B cell (primary cell): ENCODE measurements at regions of chr5 and their contacts with region 1.

Region 1: DNA sequence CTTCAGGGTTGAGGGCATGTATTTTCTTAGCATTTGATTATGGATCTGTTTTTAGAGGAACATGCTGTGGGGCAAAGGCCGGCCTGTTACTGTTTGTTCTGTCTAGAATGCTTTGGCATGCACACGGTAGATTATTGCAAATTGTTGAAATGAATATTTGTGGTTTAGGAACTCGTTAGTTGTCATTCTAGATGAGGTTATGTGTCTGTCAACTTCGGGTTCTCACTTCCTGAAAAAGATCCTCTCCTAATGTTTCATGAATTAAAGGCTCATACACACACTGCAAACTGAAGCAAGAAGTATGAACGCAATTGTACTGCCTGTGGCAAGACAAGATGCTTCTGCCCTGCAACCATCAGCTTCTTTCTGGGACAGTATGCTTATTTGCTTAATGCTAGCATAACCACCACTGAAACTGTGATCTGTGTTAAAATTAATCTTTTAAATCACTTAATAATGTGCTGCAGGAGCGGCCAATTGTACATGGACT is 99.6 kb downstream of the BASP1 start:
- DNase-seq: peak; percentile 70
- ATAC-seq: peak; percentile 53
- H3K4me3 ChIP-seq: peak overlapping the region in 3 of 5 experiments; percentile 10 to 58 (median 32)
- H3K4me3 Mint-ChIP-seq: peak overlapping the region; percentile 53
- H3K27ac ChIP-seq: peak overlapping the region; percentile 71 to 72
- H3K27ac Mint-ChIP-seq: peak overlapping the region; percentile 76
- H3K4me1 ChIP-seq: peaks cover 53 to 58% of the 10 kb centered on the region in 2 donors
- H3K4me1 Mint-ChIP-seq: peaks cover 57% of the 10 kb centered on the region
- H3K27me3 ChIP-seq: no peaks in the 10 kb centered on the region
- H3K27me3 Mint-ChIP-seq: no peaks in the 10 kb centered on the region
- CTCF ChIP-seq: no peak

Region 2: GRCh38 chr5:17269201-17269600 is 47.8 kb before region 1 on chr5:
- CTCF ChIA-PET with region 1: no interaction called
- POLR2A ChIA-PET with region 1: no interaction called
- intact Hi-C with region 1: loop called (anchors 10 kb)
- DNase-seq: peak; percentile 48
- ATAC-seq: peak; percentile 59
- H3K4me3 ChIP-seq: peak overlapping the region in 2 of 5 experiments; percentile 14 to 15
- H3K4me3 Mint-ChIP-seq: peak overlapping the region; percentile 52
- H3K27ac ChIP-seq: peak overlapping the region; percentile 43 to 71
- H3K27ac Mint-ChIP-seq: peak overlapping the region; percentile 81
- H3K4me1 ChIP-seq: peaks cover 42 to 43% of the 10 kb centered on the region in 2 donors
- H3K4me1 Mint-ChIP-seq: peaks cover 76% of the 10 kb centered on the region
- H3K27me3 ChIP-seq: no peaks in the 10 kb centered on the region
- H3K27me3 Mint-ChIP-seq: no peaks in the 10 kb centered on the region
- CTCF ChIP-seq: no peak

Region 3: DNA sequence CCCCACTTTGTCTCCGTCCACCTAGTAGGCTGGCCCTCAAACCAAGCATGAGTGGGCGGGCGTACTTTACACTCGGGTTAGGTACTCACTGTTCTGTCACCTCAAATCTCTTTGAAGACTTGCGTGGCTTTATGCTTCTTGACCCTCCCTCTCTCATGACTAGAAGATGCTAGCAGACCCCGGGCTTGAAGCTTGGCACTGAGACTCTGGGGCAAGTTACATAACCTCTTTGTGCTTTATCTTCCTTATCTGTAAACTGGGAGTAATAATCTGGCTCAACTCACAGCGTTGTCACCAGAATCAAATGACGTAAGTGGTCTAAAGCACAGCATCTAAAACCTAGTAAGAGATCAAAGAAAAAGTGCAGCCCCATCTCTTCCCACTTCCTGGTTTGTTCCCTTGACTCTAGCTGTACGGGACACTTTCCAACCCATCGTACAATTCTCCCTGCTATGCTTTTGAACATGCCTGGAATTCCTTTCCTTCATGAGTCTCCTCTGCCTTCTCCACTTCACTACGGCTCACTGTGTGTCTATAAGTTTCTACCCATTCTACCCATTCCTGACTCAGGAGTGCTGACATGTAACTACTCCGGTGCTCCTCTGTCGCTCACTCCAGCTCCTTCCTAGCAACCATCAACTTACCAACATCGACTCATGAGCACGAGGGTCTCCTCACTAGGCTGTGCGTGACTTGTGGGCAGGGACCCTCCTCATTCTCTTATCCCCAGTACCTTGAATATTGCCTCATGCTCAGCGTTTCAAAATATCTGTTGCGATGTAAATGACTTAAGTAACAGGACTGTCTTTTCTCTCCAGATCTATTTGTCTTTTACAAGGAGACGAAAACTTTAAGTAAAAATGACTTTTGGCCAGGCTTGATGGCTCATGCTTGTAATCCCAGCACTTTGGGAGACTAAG is 26.7 kb before region 1 on chr5:
- CTCF ChIA-PET with region 1: no interaction called
- POLR2A ChIA-PET with region 1: no interaction called
- intact Hi-C with region 1: loop called (anchors 2 kb)
- DNase-seq: no peak
- ATAC-seq: no peak
- H3K4me3 ChIP-seq: no peak overlapping the region
- H3K4me3 Mint-ChIP-seq: no peak overlapping the region
- H3K27ac ChIP-seq: no peak overlapping the region
- H3K27ac Mint-ChIP-seq: no peak overlapping the region
- H3K4me1 ChIP-seq: peaks cover 0 to 5% of the 10 kb centered on the region in 2 donors
- H3K4me1 Mint-ChIP-seq: peaks cover 8% of the 10 kb centered on the region
- H3K27me3 ChIP-seq: no peaks in the 10 kb centered on the region
- H3K27me3 Mint-ChIP-seq: no peaks in the 10 kb centered on the region
- CTCF ChIP-seq: no peak

Region 4: DNA sequence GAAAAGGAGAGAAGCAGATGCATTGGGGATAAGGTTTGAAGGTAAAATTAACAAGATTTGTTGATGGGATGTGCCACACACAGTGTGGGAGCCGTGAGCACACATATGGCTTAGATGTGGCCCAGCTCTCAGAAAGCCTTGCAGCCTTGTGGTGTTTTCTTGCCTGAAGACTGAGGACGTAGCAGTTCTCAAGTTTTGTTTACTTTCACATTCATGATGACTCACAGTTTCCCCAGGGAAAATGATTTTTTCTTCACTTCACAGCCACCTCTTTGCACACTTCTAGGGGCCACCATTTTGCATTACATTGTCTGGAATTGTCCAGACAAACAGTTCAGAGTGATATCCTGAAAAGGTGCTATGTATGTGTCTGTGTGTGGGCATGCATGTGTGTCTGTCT is 26.7 kb after region 1 on chr5:
- CTCF ChIA-PET with region 1: no interaction called
- POLR2A ChIA-PET with region 1: no interaction called
- intact Hi-C with region 1: loop called (anchors 1 kb)
- DNase-seq: peak; percentile 59
- ATAC-seq: peak; percentile 82
- H3K4me3 ChIP-seq: no peak overlapping the region
- H3K4me3 Mint-ChIP-seq: peak overlapping the region; percentile 9
- H3K27ac ChIP-seq: no peak overlapping the region
- H3K27ac Mint-ChIP-seq: peak overlapping the region; percentile 61
- H3K4me1 ChIP-seq: peaks cover 7 to 9% of the 10 kb centered on the region in 2 donors
- H3K4me1 Mint-ChIP-seq: peaks cover 9% of the 10 kb centered on the region
- H3K27me3 ChIP-seq: no peaks in the 10 kb centered on the region
- H3K27me3 Mint-ChIP-seq: no peaks in the 10 kb centered on the region
- CTCF ChIP-seq: no peak

Region 5: DNA sequence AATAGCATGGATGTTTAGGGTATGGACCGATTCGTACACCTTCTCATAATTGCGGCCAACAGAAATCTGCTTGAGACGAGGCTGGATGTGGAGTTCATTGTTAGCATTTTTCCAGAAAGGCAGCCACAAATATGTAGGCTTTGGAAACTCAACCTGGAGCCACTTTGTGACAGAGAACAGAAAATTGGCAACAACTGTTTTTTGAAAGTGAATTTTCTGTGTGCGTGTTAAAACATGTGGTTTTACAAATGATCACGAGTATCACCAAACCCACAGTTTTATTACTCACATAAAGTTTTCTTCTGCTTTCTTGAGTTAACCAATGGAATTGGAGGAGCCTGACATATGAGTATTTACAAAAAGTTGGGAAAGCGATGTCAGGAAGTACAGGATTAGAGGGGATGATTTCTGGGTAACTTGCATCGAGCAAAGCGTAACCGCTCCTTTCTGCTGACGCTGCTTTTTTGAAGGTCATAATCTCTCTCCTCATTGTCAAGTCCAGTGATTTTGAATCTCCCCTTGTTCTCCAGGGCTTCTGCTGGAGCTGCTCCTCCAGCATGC is 42.5 kb after region 1 on chr5:
- CTCF ChIA-PET with region 1: interaction called, 4 read pairs
- POLR2A ChIA-PET with region 1: no interaction called
- intact Hi-C with region 1: loop called (anchors 5 kb)
- DNase-seq: no peak
- ATAC-seq: no peak
- H3K4me3 ChIP-seq: no peak overlapping the region
- H3K4me3 Mint-ChIP-seq: no peak overlapping the region
- H3K27ac ChIP-seq: no peak overlapping the region
- H3K27ac Mint-ChIP-seq: no peak overlapping the region
- H3K4me1 ChIP-seq: peaks cover 9 to 10% of the 10 kb centered on the region in 2 donors
- H3K4me1 Mint-ChIP-seq: peaks cover 15% of the 10 kb centered on the region
- H3K27me3 ChIP-seq: no peaks in the 10 kb centered on the region
- H3K27me3 Mint-ChIP-seq: no peaks in the 10 kb centered on the region
- CTCF ChIP-seq: no peak